Thyroid gland (tissue), 4 donors: ENCODE measurements at regions of chr9 and their contacts with region 1.

Region 1: DNA sequence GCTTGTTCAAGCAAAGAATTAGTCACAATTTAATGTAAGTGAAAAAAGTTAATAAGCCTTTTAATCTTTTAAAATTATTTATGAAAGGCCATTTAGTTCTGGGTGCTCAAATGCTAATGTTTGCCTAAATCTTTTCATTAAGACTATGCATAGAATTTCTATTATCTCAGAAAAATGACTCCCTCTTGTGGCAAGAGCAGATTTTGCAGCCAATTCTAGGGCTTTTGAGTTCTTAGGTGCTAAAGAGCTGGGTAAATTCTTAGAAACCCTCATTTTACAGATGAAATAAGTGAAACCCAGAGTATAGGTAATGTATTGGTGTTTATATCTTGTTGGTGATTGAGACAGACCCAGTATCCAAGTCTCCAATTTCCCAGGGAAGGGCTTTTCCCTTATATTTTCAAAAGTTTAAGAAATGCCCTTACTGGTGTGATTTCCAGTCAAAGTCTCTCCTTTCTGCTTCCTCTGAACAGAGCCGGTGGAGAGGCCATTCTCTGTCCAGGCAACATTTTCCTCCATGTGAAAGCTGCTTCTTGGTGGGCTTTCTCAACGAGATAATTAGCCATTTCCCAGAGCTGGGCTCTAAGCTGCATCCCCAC is 24.1 kb upstream of the PCSK5 start:
- DNase-seq: peak; percentile 45 to 51
- H3K4me3 ChIP-seq: no peak overlapping the region
- H3K27ac ChIP-seq: no peak overlapping the region
- H3K4me1 ChIP-seq: no peaks in the 10 kb centered on the region
- H3K27me3 ChIP-seq: no peaks in the 10 kb centered on the region
- CTCF ChIP-seq: peak; percentile 33 to 73 (median 62)
- POLR2A ChIP-seq: no peak

Region 2: DNA sequence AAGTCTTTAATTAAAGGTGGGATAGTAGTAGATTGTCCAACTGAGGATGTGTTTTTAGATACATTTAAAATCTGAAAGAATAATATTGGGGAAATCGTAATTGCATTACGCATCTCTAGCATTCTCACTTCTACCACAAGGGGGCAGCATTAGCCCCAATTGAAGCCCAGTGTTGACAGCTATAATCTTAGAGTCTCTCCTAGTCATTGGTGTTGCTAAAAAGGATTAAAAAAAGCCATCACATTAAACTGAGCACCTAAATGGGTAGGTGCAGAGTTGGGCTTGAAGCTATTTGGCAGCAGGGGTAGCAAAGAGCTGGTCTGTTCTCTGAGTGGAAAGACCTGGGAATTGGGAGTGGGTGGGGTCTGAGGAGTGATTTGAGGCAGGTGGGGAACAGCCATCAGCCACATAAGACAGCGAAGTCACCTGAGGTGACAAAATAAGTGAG is 600.8 kb before region 1 on chr9:
- intact Hi-C with region 1: loop called (anchors 10 kb)
- DNase-seq: peak; percentile 54 to 63
- H3K4me3 ChIP-seq: no peak overlapping the region
- H3K27ac ChIP-seq: no peak overlapping the region
- H3K4me1 ChIP-seq: peaks cover 10 to 12% of the 10 kb centered on the region in 2 donors
- H3K27me3 ChIP-seq: no peaks in the 10 kb centered on the region
- CTCF ChIP-seq: peak; percentile 81 to 90 (median 86)
- POLR2A ChIP-seq: no peak

Region 3: GRCh38 chr9:75921391-75922127 is 55.2 kb after region 1 on chr9:
- intact Hi-C with region 1: no loop called
- DNase-seq: no peak
- H3K4me3 ChIP-seq: no peak overlapping the region
- H3K27ac ChIP-seq: no peak overlapping the region
- H3K4me1 ChIP-seq: no peaks in the 10 kb centered on the region
- H3K27me3 ChIP-seq: no peaks in the 10 kb centered on the region
- CTCF ChIP-seq: no peak
- POLR2A ChIP-seq: no peak